ENCODE measurements at regions of chr7 and their contacts with region 1.

Region 1: GRCh38 chr7:129825496-129826267 is 127.1 kb downstream of the UBE2H start:
- DNase-seq: peak; percentile 84 to 90
- H3K4me3 ChIP-seq: peak overlapping the region; percentile 59 to 70
- H3K27ac ChIP-seq: peak overlapping the region; percentile 78 to 81
- H3K4me1 ChIP-seq: peaks cover 9 to 37% (median 21%) of the 10 kb centered on the region in 4 donors
- H3K27me3 ChIP-seq: no peaks in the 10 kb centered on the region
- CTCF ChIP-seq: peak; percentile 64 to 98

Region 2: DNA sequence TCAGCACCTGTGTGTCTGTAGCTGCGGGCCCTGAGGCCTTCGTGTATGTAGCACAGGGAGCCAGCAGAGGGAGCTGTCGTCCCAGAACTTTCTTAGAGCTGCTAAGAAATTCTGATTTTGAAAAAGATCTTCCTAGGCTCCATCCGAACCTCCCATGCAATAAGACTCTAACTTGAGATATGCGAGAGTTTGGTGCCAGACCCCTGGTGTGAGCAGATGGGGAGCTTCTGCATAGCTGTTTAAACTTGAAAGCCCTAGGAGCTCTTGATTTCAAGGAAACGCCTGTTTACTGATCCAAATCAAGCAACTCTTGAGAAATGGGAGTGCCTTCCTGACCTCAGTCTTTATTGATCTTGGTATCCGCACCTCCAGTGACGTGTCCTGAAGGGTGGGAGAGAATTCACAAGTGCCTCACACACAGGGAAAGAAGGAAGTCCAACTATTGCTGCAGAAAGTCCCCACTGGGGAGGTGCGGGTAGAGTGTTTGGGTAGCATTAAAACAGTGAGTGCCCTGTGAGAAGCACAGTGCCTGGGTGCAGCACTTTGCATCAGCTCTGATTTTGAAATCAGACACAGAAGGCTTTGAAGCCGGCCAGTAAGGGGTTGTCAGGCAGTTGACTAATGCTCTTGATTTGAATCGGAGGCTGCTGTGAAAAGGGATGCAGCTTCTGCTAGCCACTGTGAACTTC is 457.8 kb before region 1 on chr7:
- intact Hi-C with region 1: loop called (anchors 10 kb)
- DNase-seq: peak; percentile 65 to 78
- H3K4me3 ChIP-seq: no peak overlapping the region
- H3K27ac ChIP-seq: no peak overlapping the region
- H3K4me1 ChIP-seq: peaks cover 0 to 10% (median 3%) of the 10 kb centered on the region in 4 donors
- H3K27me3 ChIP-seq: no peaks in the 10 kb centered on the region
- CTCF ChIP-seq: peak; percentile 79 to 80

Region 3: DNA sequence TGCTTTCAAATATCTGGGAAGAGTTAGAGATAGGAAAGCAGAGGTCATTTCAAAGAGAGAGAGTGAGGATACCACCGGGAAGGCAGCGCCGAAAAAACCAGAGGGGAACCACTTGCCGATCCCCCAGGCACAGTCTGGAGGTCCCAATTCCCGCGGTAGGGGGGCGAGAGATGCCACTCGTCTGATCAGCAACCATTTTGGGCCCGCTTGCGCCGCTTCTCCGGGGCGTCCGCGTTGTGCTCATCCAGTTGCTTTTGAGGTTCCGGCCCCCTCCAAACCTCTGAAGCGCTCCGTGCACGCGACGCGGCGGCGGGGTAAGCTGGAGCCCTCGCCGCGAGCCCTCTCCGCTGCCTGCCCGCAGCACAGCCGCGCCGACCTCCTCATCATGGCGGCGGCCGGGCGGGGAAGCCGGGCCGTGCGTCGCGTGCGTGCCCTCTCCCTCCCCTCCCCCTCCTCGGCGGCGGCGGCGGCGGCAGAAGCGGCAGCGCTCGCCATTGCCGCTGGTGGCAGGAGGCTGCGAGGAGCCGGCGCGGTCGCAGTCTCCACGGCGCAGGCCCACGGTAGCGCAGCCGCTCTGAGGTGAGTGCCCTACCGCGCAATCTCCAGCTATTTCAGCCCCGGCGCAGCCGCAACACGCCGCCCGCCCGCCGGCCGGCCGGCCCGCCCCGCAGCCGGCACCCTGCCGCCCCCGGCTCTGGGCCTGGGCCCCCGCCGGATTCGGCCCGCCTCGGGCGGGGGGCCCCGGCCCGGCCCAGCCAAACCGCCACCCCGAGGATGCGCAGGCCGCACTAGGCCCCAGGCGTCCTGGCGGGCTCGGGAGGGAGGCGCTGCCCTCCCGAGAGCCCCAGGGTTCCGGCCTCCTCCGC is 214.2 kb before region 1 on chr7 and contains the start of gene NRF1:
- intact Hi-C with region 1: loop called (anchors 10 kb)
- DNase-seq: peak; percentile 81 to 92
- H3K4me3 ChIP-seq: peak within 1 kb of the TSS; percentile 75 to 92
- H3K27ac ChIP-seq: peak within 1 kb of the TSS; percentile 93 to 95
- H3K4me1 ChIP-seq: peaks cover 0 to 50% (median 14%) of the 10 kb centered on the region in 4 donors
- H3K27me3 ChIP-seq: no peaks in the 10 kb centered on the region
- CTCF ChIP-seq: peak; percentile 28 to 44

Region 4: GRCh38 chr7:129664029-129665012 is 161.4 kb before region 1 on chr7:
- intact Hi-C with region 1: loop called (anchors 10 kb)
- DNase-seq: no peak
- H3K4me3 ChIP-seq: no peak overlapping the region
- H3K27ac ChIP-seq: no peak overlapping the region
- H3K4me1 ChIP-seq: no peaks in the 10 kb centered on the region
- H3K27me3 ChIP-seq: no peaks in the 10 kb centered on the region
- CTCF ChIP-seq: peak; percentile 31 to 58

Region 5: DNA sequence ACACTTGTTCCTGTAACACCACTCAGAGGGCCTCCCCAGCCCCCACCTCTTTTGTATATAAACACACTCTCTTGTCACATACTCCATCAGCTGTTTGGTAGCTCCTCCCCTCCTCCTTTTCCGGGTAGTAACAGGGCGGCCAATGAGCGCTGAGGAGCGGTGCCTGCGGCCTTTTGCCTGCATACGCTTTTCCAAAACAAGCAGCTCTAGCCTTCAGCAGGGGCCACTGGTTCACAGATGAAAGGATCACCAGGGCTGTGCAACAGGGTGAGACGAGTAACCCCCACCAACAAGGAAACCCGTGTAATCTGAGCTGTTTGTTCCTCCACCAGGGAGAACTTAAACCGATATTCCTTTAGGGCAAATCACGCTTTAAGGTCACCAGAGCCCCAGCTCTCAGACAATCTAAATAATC is 123.2 kb after region 1 on chr7:
- intact Hi-C with region 1: loop called (anchors 2 kb)
- DNase-seq: peak; percentile 91 to 93
- H3K4me3 ChIP-seq: peak overlapping the region; percentile 78 to 97
- H3K27ac ChIP-seq: peak overlapping the region; percentile 90 to 99
- H3K4me1 ChIP-seq: peaks cover 0 to 56% (median 28%) of the 10 kb centered on the region in 4 donors
- H3K27me3 ChIP-seq: no peaks in the 10 kb centered on the region
- CTCF ChIP-seq: no peak

Region 6: DNA sequence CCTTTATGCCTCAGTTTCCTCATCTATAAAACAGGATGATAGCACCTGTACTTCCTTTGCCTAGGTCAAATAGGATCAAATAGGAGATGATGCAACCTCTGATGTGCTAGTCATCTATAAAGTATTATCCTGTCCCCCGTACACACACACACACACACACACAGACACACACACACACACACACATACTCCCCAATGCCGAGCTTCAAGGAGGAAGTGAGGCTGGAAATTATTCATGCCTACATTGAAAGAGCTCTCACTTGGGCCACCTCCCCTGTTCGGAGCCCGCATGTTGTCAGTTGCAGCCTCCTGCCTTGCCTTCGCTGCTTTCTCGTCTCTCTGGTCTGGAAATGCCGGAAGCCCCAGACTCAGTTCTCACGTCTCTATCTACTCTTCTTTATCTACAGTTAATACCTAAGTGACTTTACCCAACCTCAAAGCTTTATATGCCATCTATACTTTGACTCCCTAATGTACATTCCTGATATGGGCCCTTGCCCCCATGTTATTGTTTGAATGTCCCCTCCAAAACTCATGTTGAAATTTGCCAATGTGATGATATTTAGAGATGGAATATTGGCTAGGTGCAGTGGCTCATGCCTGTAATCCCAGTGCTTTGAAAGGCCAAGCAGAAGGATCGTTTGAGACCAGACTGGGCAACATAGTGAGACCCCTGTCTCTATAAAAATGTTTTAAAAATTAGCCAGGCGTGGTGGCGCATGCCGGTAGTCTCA is 134.0 kb after region 1 on chr7:
- intact Hi-C with region 1: no loop called
- DNase-seq: no peak
- H3K4me3 ChIP-seq: no peak overlapping the region
- H3K27ac ChIP-seq: no peak overlapping the region
- H3K4me1 ChIP-seq: no peaks in the 10 kb centered on the region
- H3K27me3 ChIP-seq: no peaks in the 10 kb centered on the region
- CTCF ChIP-seq: no peak

Region 7: GRCh38 chr7:130010689-130011412 is 185.2 kb after region 1 on chr7:
- intact Hi-C with region 1: loop called (anchors 5 kb)
- DNase-seq: peak; percentile 90
- H3K4me3 ChIP-seq: no peak overlapping the region
- H3K27ac ChIP-seq: peak overlapping the region; percentile 14 to 37
- H3K4me1 ChIP-seq: peaks cover 0 to 23% (median 8%) of the 10 kb centered on the region in 4 donors
- H3K27me3 ChIP-seq: no peaks in the 10 kb centered on the region
- CTCF ChIP-seq: peak; percentile 78 to 94